ENCODE measurements at regions of chr10 and their contacts with region 1.

Region 1: DNA sequence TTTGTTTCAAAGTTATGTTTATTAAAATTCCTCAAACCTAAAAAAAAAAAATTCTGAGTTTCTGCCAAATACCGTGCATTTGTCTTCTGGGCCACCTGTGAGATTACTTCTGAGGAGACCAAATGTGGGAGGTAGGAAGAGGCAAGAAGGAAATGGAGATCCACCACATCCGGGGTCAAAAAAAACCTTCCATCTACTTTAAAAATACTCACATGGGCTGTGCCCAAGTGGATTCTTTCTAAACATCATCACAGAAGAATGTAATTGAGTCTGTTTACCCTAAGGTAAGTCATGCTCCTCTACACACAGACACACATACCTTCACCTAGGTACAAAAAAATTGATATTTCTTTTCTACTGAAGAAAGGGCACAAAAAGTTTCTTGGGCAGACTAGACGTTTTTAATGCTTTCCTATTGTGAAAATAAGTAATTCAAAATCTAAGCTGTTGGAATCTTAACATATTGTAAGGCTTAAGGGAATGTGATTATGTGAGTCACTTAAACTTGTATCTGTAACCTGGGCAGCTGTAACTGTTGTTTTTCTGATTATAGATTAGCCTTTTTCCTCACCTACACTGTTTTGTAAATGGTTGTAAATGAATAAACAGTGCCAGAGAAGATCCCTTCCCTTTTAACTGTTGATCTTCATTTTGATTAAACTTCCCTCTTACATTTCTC is 19.1 kb upstream of the SPOCK2 start:
- DNase-seq: peak; percentile 84
- H3K4me3 Mint-ChIP-seq: peak overlapping the region; percentile 83
- H3K27ac Mint-ChIP-seq: peak overlapping the region; percentile 93
- H3K4me1 Mint-ChIP-seq: peaks cover 55% of the 10 kb centered on the region
- H3K27me3 Mint-ChIP-seq: no peaks in the 10 kb centered on the region

Region 2: DNA sequence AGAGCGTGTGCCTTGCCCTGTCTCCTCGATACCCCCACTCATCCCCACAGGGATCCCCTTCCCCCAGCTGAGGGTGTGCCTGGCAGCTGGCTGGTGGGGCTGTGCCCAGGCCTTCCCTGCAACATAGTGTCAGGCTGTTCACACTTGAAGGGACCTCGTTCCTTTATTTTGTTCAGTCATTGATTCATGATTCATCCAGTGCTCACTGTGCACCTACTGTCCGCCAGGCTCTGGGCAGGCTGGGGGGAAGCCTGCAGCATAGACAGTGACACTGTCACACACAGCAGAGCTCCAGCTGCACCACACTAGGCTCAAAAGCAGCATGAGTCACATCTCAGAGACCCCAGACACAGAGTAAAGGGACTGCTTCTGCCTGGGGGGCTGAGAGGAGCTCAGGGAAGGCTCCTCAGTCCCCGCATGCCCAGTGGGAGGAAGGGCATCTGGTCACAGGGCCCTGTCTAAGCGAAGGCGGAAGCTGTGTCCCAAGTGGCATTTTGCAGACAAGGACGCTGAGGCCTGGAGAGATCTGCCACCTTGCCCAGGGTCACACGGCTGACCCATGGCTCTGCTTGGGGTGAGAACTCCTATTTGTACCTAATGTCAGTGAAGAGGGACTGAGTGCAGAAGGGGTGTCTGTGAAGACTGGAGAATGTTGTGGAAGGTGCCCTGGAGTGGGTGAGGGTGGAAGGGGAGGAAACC is 682.8 kb before region 1 on chr10:
- intact Hi-C with region 1: no loop called
- DNase-seq: no peak
- H3K4me3 Mint-ChIP-seq: no peak overlapping the region
- H3K27ac Mint-ChIP-seq: no peak overlapping the region
- H3K4me1 Mint-ChIP-seq: no peaks in the 10 kb centered on the region
- H3K27me3 Mint-ChIP-seq: peaks cover 3% of the 10 kb centered on the region

Region 3: DNA sequence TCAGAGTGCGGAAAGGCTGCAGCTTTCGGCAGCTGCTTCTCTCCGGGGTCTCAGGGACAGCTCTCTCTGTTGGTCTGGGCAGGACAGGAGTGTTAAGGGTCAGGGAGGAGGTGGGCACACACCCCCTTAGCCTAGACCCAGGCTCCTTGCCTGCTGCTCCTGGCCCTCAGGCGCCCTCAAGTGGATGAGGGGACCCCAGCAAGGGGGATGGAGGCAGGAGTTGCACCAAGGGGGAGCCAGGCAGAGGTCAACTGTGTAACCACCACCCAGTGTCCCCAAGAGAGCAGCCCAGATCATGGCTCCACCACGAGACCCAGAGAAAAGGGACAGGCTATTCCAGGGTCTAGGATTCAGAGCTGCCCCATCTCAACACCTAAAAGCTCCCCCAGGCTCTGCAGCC is 46.0 kb before region 1 on chr10:
- intact Hi-C with region 1: no loop called
- DNase-seq: no peak
- H3K4me3 Mint-ChIP-seq: no peak overlapping the region
- H3K27ac Mint-ChIP-seq: no peak overlapping the region
- H3K4me1 Mint-ChIP-seq: peaks cover 4% of the 10 kb centered on the region
- H3K27me3 Mint-ChIP-seq: no peaks in the 10 kb centered on the region

Region 4: GRCh38 chr10:72096115-72097000 is 11.1 kb before region 1 on chr10:
- intact Hi-C with region 1: loop called (anchors 1 kb)
- DNase-seq: no peak
- H3K4me3 Mint-ChIP-seq: peak overlapping the region; percentile 58
- H3K27ac Mint-ChIP-seq: peak overlapping the region; percentile 78
- H3K4me1 Mint-ChIP-seq: peaks cover 45% of the 10 kb centered on the region
- H3K27me3 Mint-ChIP-seq: no peaks in the 10 kb centered on the region

Measured in activated CD4-positive, alpha-beta T cell treated with anti-CD3 and anti-CD28 coated beads, Interleukin-2, amount 10 ng/mL, durations not matched to agents 24 days and 14 days (primary cell).